BJ (cell line): ENCODE measurements at regions of chr13 and their contacts with region 1.

Region 1: GRCh38 chr13:30268673-30269072 is 38.7 kb downstream of the KATNAL1 start:
- DNase-seq: no peak
- H3K4me3 ChIP-seq: no peak overlapping the region
- H3K27me3 ChIP-seq: no peaks in the 10 kb centered on the region
- CTCF ChIP-seq: no peak

Region 2: DNA sequence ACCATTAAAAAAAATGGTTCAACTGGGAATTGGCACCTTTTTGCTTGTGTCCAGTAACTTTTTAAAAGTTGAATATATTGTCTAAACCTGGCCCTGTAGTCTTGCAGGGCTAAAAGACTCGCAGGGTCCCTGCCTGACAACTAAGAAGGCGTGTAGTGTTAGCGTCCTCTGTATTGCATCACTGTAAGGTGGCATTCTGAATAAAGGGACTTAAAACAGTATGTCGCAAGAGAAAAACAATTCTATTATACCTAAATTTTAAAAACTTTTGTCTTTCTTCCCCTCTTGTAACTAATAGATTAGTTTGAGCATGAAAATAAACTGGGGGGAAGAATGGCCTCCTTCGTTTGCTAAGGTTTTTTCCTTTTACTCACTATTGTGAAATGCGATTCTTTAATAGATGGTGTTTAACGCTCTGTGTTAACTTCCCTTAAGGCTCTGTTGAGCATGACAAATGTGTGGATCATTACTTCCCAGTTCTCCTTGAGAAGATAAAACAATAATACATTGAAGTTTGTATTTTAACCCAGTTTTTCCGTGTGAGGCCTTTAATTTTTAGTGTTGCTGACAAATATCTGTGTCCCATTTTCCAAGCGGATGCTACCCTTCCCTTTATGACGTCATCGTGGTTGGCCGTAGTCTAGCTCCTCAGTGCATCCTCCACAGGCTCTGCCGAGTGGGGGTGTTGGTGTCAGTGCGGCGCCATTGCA is 95.9 kb before region 1 on chr13:
- CTCF ChIA-PET with region 1: no interaction called
- POLR2A ChIA-PET with region 1: no interaction called
- DNase-seq: no peak
- H3K4me3 ChIP-seq: no peak overlapping the region
- H3K27me3 ChIP-seq: no peaks in the 10 kb centered on the region
- CTCF ChIP-seq: no peak

Region 3: GRCh38 chr13:30362005-30362788 is 93.5 kb after region 1 on chr13:
- CTCF ChIA-PET with region 1: no interaction called
- POLR2A ChIA-PET with region 1: interaction called, 18 read pairs
- DNase-seq: no peak
- H3K4me3 ChIP-seq: no peak overlapping the region
- H3K27me3 ChIP-seq: no peaks in the 10 kb centered on the region
- CTCF ChIP-seq: no peak

Region 4: GRCh38 chr13:31649766-31650165 is 1381.1 kb after region 1 on chr13:
- CTCF ChIA-PET with region 1: no interaction called
- POLR2A ChIA-PET with region 1: no interaction called
- DNase-seq: no peak
- H3K4me3 ChIP-seq: no peak overlapping the region
- H3K27me3 ChIP-seq: no peaks in the 10 kb centered on the region
- CTCF ChIP-seq: no peak